Sigmoid colon (tissue), 7 donors: ENCODE measurements at regions of chr2 and their contacts with region 1.

Region 1: GRCh38 chr2:197168705-197169104 is 141.9 kb downstream of the ANKRD44 start:
- DNase-seq: peak; percentile 78
- H3K4me3 ChIP-seq: no peak overlapping the region
- H3K27ac ChIP-seq: peak overlapping the region in 2 of 4 donors; percentile 2 to 76
- H3K4me1 ChIP-seq: peaks cover 0 to 46% (median 39%) of the 10 kb centered on the region in 4 donors
- H3K27me3 ChIP-seq: no peaks in the 10 kb centered on the region
- CTCF ChIP-seq: peak in 2 of 4 experiments; percentile 21 to 41
- EP300 ChIP-seq: no peak
- POLR2A ChIP-seq: no peak

Region 2: DNA sequence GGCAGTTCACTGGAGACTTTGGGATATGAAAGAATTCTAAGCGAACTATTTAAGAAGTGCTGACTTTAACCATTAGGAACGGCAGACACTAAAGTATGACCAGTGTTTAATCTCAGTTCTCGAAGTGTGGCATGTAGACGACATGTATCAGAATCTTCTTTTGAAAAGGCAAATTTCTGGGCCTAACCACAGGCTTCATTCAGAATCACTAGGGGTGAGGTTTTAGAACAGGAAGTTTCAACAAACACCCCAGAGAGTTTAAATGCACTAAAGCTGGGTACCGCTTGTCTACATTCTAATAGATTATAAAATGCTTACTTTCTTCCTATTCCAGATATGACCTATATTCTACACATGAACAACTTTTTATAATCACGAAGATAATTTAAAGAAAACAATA is 38.4 kb before region 1 on chr2:
- intact Hi-C with region 1: loop called (anchors 5 kb)
- DNase-seq: no peak
- H3K4me3 ChIP-seq: no peak overlapping the region
- H3K27ac ChIP-seq: no peak overlapping the region
- H3K4me1 ChIP-seq: peaks cover 0 to 23% (median 16%) of the 10 kb centered on the region in 4 donors
- H3K27me3 ChIP-seq: no peaks in the 10 kb centered on the region
- CTCF ChIP-seq: no peak
- EP300 ChIP-seq: no peak
- POLR2A ChIP-seq: no peak

Region 3: GRCh38 chr2:197191177-197191939 is 22.7 kb after region 1 on chr2:
- intact Hi-C with region 1: no loop called
- DNase-seq: no peak
- H3K4me3 ChIP-seq: no peak overlapping the region
- H3K27ac ChIP-seq: no peak overlapping the region
- H3K4me1 ChIP-seq: peaks cover 0 to 51% (median 20%) of the 10 kb centered on the region in 4 donors
- H3K27me3 ChIP-seq: no peaks in the 10 kb centered on the region
- CTCF ChIP-seq: peak; percentile 15 to 80 (median 62)
- EP300 ChIP-seq: no peak
- POLR2A ChIP-seq: no peak

Region 4: DNA sequence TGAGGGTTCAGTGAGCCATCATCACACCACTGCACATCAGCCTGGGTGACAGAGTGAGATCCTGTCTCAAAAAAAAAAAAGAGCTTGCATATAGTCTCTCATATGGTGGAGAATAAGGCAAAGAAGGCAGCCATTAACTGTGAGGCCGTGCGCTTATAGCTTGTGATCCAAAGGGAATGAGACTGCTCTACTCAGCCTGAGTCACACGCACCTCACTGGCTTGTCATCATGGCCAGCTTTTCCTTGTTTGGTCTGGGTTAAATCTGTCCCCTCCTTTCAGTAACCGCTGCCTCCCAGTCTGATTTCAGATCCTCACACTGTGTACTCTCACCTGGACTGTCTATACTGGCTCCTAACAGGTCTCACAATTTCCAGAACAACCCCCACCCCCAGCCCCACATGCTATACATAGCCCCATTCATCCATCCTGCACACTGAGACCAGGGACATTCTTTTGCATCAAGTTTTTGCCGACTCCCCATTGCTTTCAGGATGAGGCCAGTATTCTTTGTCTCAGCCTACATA is 177.2 kb after region 1 on chr2:
- intact Hi-C with region 1: no loop called
- DNase-seq: no peak
- H3K4me3 ChIP-seq: no peak overlapping the region
- H3K27ac ChIP-seq: no peak overlapping the region
- H3K4me1 ChIP-seq: no peaks in the 10 kb centered on the region
- H3K27me3 ChIP-seq: no peaks in the 10 kb centered on the region
- CTCF ChIP-seq: no peak
- EP300 ChIP-seq: no peak
- POLR2A ChIP-seq: no peak

Region 5: DNA sequence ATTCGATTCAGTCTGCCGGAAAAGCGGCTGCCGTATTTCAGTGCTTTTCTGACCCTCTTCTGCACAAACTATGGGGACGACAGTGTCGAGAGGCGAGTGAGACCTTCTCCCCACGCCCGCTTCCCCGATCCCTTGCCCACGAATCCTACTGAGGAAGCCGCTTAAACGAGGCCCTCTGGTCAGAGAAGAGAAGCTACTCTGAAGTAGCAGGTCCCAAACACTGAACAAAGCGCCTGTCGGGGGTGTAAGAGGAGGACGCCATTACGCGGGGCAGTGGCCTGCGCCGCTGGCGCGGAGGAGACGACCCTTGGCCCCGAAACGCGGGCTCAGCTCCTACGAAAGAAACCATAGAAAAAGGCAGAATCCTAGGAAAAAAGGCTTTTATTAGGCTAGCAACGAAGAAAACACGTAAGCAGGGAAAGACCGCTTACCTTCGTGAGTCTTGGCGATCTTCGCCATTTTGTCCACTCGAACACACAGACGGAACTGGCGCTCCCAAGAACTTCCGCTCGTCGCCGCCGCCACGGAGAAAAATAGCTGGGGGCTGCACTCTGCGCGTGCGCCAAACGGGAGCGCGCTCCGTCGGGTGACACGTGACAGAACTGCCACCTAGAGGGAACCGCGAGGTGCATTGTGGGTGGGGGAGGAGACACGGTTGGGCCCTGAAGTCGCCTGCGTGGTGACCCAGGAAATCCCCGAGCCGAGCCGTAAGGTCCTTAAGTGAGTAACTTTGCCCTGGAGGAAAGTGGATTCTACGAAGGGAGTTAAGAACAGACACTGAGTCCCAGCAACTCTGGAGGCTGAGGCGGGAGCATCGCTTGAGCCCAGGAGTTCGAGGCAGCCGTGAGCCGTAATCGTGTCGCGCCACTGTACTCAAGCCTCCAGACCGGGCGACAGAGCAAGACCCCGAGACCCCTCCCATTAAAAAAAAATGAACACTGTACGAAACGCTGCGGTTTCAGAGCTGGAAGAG is 266.1 kb after region 1 on chr2 and contains the start of gene SF3B1:
- intact Hi-C with region 1: no loop called
- DNase-seq: peak; percentile 99
- H3K4me3 ChIP-seq: peak within 1 kb of the TSS; percentile 86 to 98 (median 92)
- H3K27ac ChIP-seq: peak within 1 kb of the TSS; percentile 91 to 98 (median 97)
- H3K4me1 ChIP-seq: peaks cover 0 to 50% (median 45%) of the 10 kb centered on the region in 4 donors
- H3K27me3 ChIP-seq: no peaks in the 10 kb centered on the region
- CTCF ChIP-seq: no peak
- EP300 ChIP-seq: peak in 1 of 4 donors; percentile 82
- POLR2A ChIP-seq: peak; percentile 90 to 93
- total RNA-seq, gene SF3B1: 258 to 475 (median 332) TPM